PC-3 (cell line): ENCODE measurements at regions of chr7 and their contacts with region 1.

Region 1: DNA sequence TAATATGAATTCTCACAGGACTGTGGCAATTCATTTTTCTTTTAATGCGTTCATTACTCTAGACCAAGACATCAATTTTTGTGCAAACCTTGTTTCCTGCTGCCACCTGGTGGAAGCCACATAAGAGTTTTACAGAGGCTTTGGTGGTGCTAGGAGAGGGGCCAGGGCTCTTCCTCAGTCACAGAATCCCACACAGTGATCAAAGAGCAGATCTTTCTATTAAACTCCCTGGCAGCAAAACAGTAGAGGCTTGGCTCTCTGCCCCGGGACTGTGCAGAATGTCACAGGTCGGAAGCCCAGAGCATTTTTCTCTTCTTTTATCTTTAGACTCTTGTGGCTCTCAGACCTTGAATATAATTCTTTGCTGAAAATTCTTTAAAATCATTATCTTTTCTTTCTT is 506.4 kb upstream of the C7orf33 start:
- DNase-seq: peak; percentile 69
- ATAC-seq: peak; percentile 95
- H3K4me3 ChIP-seq: no peak overlapping the region
- H3K27ac ChIP-seq: no peak overlapping the region
- H3K4me1 ChIP-seq: no peaks in the 10 kb centered on the region
- H3K27me3 ChIP-seq: no peaks in the 10 kb centered on the region
- CTCF ChIP-seq: peak; percentile 81

Region 2: GRCh38 chr7:146115851-146116520 is 1968.2 kb before region 1 on chr7:
- CTCF ChIA-PET with region 1: no interaction called
- POLR2A ChIA-PET with region 1: no interaction called
- intact Hi-C with region 1: loop called (anchors 5 kb)
- DNase-seq: peak; percentile 46
- ATAC-seq: peak; percentile 70
- H3K4me3 ChIP-seq: peak overlapping the region; percentile 66
- H3K27ac ChIP-seq: no peak overlapping the region
- H3K4me1 ChIP-seq: no peaks in the 10 kb centered on the region
- H3K27me3 ChIP-seq: peaks cover 19% of the 10 kb centered on the region
- CTCF ChIP-seq: no peak

Region 3: GRCh38 chr7:147033641-147034040 is 1050.5 kb before region 1 on chr7:
- CTCF ChIA-PET with region 1: no interaction called
- POLR2A ChIA-PET with region 1: no interaction called
- intact Hi-C with region 1: loop called (anchors 5 kb)
- DNase-seq: no peak
- ATAC-seq: no peak
- H3K4me3 ChIP-seq: no peak overlapping the region
- H3K27ac ChIP-seq: no peak overlapping the region
- H3K4me1 ChIP-seq: no peaks in the 10 kb centered on the region
- H3K27me3 ChIP-seq: no peaks in the 10 kb centered on the region
- CTCF ChIP-seq: no peak

Region 4: GRCh38 chr7:147432079-147432478 is 652.1 kb before region 1 on chr7:
- CTCF ChIA-PET with region 1: no interaction called
- POLR2A ChIA-PET with region 1: no interaction called
- intact Hi-C with region 1: loop called (anchors 1 kb)
- DNase-seq: peak; percentile 56
- ATAC-seq: peak; percentile 26; the same call in 1 of the 2 replicates
- H3K4me3 ChIP-seq: no peak overlapping the region
- H3K27ac ChIP-seq: no peak overlapping the region
- H3K4me1 ChIP-seq: peaks cover 17% of the 10 kb centered on the region
- H3K27me3 ChIP-seq: no peaks in the 10 kb centered on the region
- CTCF ChIP-seq: peak; percentile 74

Region 5: GRCh38 chr7:147570390-147570789 is 513.7 kb before region 1 on chr7:
- CTCF ChIA-PET with region 1: no interaction called
- POLR2A ChIA-PET with region 1: no interaction called
- intact Hi-C with region 1: loop called (anchors 1 kb)
- DNase-seq: peak; percentile 96
- ATAC-seq: peak; percentile 73
- H3K4me3 ChIP-seq: 0 out of 2 replicates have a peak overlapping the region, but pooled peaks have one; percentile 5
- H3K27ac ChIP-seq: peak overlapping the region; percentile 87
- H3K4me1 ChIP-seq: peaks cover 37% of the 10 kb centered on the region
- H3K27me3 ChIP-seq: no peaks in the 10 kb centered on the region
- CTCF ChIP-seq: no peak